ENCODE measurements at regions of chr15 and their contacts with region 1.

Region 1: DNA sequence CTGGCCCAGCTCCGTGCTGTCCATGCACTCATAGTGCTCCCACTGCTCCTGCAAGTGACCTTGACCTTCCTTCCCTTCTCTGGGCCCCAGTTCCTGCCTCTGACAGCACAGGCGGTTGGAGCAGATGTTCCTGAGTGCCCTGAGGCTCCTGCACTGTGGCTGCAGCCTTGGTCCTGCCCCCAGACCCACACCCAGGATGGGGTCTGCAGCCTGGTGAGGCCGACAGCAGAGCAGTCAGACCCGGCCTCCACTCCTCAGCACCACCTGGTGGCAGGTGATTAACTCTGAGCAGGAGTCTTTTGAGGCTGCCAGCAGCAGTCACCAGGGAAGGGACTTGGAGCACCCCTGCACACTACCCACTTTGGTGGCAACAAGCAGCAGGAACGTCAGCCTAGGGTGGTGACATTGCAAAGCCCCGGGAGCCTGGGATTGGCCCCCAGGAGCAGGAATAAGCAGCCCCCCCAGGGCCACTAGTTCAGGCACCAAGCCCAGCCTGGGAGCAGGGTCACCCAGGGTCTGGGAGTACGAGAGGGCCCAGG is 64.6 kb downstream of the CYP11A1 start:
- DNase-seq: peak; percentile 9
- H3K4me3 ChIP-seq: no peak overlapping the region
- H3K27ac ChIP-seq: no peak overlapping the region
- H3K4me1 ChIP-seq: no peaks in the 10 kb centered on the region
- H3K27me3 ChIP-seq: peaks cover 17 to 31% of the 10 kb centered on the region in 2 experiments
- CTCF ChIP-seq: peak; percentile 20 to 45
- POLR2A ChIP-seq: no peak

Region 2: DNA sequence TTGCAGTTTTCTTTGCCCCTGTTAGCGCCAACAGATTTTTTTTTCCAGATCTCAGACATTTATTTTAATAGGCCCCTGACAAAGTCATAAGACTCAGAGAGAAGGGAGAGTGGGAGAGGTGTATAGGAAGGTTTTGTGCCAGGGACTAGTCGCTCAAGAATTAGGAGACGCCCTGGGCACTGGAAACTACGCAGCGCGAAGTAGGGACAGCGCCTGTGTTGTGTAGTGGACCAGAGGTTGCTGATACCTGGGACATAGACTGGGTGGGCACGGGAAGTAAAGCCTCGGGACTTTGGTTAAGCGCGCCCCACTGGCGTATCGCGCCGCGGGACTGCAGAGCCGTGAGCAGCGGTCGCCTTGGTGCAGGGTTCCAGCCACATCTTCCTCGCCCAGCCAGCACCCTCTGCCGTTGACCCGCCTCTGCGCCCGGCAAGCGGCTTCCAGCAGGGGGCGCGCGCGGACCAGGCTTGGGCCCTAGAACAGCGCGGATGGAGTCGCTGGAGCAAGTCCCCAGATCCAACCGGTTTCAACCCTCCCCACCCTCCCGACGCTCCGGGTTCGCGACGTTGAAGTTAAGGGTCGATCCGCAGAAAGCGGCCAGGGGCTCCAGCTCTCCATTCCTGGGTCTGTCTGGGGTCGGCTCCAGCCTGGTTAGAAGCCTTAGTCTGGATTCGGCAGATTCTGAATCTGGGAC is 175.5 kb before region 1 on chr15:
- CTCF ChIA-PET with region 1: interaction called, 115 read pairs
- POLR2A ChIA-PET with region 1: interaction called, 8 read pairs
- dilution Hi-C with region 1: no loop called
- intact Hi-C with region 1: loop called (anchors 1 kb)
- DNase-seq: peak; percentile 75
- H3K4me3 ChIP-seq: peak overlapping the region in 1 of 3 experiments; percentile 14
- H3K27ac ChIP-seq: no peak overlapping the region
- H3K4me1 ChIP-seq: peaks cover 4% of the 10 kb centered on the region
- H3K27me3 ChIP-seq: peaks cover 56 to 71% of the 10 kb centered on the region in 2 experiments
- CTCF ChIP-seq: peak; percentile 95 to 100
- POLR2A ChIP-seq: no peak

Region 3: DNA sequence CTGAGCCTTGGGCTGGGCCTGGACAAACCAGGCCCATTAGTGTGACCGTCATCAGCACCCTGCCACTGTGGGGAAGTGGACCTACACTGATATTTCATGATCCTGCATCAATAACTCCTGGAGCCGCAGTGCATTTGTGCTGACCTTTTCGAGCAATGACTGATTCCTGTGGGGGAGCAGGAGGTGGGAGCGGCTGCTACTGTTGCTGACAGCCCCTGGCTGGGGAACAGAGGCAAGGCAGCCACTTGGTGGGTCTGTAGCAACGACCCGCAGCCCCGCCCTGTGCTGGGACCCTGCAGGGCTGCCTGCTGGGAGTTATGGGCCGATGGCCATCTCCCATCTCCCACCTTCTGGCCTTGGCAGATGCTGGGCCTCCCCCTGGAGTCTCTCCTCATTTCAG is 24.7 kb before region 1 on chr15:
- CTCF ChIA-PET with region 1: no interaction called
- POLR2A ChIA-PET with region 1: no interaction called
- dilution Hi-C with region 1: no loop called
- intact Hi-C with region 1: no loop called
- DNase-seq: no peak
- H3K4me3 ChIP-seq: no peak overlapping the region
- H3K27ac ChIP-seq: no peak overlapping the region
- H3K4me1 ChIP-seq: no peaks in the 10 kb centered on the region
- H3K27me3 ChIP-seq: peaks cover 0 to 5% of the 10 kb centered on the region in 2 experiments
- CTCF ChIP-seq: no peak
- POLR2A ChIP-seq: no peak